ENCODE measurements at regions of chr13 and their contacts with region 1.

Region 1: DNA sequence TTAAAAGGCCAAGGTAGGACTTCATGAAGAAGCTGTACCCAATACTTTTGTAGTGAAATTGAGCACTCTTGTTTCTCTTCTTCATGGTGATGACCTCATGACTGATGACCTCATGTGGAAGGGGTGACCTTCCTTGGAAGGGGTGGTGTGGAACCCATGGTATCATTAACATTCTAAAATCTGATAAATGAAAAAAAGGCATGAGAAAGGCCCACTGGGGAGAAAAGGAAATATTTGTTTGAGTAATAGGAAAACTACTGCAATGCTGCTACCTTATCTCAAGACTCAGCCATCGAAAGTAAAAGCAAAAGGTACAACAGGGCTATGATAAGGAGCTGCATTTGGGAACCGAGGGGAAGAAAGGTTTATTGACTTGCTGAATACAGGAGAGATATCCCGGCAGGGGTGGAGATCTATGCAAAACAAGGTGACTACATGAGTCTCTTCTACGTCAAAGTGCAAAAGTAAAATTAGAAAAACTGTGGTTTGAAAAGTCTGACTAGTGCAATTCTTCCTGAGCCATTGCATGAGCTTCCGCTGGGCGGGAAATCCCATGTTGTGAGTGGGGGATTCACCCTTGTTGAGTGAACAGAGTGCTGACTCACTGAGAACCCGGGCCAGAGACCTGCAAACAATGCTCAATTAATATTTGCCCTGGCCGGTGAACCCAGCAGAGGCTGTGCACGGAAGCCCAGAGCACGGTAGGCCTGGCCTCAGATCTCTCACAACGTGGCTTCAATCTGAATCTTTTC is 138.9 kb upstream of the RFC3 start:
- DNase-seq: peak; percentile 88
- H3K4me3 Mint-ChIP-seq: peak overlapping the region; percentile 43
- H3K27ac Mint-ChIP-seq: peak overlapping the region; percentile 92
- H3K4me1 Mint-ChIP-seq: peaks cover 26% of the 10 kb centered on the region
- H3K27me3 Mint-ChIP-seq: no peaks in the 10 kb centered on the region

Region 2: DNA sequence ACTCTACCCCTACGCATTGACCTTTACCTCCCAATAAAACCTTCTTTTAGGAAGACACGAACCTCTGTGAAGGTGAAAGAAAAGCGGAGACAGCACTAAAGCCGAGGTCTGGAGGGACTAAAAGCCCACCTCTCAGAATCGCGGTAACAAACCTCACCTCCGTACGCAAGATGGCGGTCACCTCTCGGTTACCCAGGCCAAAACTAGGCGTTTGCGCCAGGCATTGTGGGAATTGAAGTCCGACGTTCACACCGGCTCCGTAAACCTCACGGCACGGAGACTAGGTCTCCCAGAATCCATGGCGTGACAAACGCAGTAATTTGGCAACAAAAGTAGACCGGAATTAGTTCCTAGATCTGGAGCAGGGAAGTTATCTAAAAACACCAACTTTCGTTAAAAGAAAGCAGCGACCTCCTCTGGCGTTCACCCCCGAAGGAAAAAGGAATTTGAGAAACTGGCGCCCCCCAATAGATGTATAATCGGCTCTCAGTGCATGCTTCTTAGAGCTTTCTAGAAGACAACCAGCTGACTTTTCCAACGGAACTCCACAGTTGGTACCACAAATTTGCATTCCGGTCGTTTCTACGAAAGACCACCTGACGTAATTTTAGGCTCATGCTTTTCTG is 1140.3 kb before region 1 on chr13 and contains the start of gene N4BP2L2:
- intact Hi-C with region 1: loop called (anchors 2 kb)
- DNase-seq: peak; percentile 97
- H3K4me3 Mint-ChIP-seq: peak within 1 kb of the TSS; percentile 98
- H3K27ac Mint-ChIP-seq: peak within 1 kb of the TSS; percentile 99
- H3K4me1 Mint-ChIP-seq: peaks cover 37% of the 10 kb centered on the region
- H3K27me3 Mint-ChIP-seq: peaks cover 8% of the 10 kb centered on the region
- total RNA-seq, gene N4BP2L2: 87.5 and 88.0 TPM in 2 replicates

Region 3: DNA sequence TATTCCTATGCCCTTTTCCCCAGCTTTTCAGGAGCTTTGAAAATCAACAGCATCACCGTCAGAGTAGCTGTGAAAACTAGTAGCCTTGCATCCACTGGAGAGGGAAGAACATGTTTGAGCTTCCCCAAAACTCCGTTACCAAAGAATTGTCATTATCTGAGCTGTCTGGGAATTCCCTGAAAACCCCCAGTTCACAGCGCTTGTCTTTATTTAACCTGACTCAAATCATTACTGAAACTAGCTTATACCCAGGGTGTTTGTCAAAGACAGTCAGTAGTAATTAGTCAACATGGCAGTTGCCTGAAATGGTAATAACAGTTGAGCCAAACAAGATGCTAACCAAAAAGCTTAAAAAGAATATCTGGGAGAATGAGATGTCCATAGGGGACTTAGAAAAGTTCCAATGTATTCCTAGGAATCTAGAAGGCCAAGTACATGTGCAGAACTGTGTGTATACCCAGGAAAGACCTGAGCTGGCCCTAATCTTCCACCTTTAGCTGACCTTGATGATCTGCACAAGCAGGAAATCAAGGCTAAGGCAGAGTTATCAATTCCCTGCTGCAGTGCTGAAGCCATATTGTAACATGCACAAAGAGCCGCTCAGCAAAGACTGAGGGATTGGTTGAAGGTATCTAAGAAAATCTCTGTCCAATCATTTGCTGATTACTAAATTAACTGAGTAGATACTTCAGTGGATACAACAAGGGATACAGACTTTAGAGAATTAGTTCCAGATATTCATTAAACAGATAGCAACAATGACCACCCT is 532.1 kb before region 1 on chr13:
- intact Hi-C with region 1: loop called (anchors 1 kb)
- DNase-seq: peak; percentile 75
- H3K4me3 Mint-ChIP-seq: peak overlapping the region; percentile 35
- H3K27ac Mint-ChIP-seq: peak overlapping the region; percentile 90
- H3K4me1 Mint-ChIP-seq: peaks cover 28% of the 10 kb centered on the region
- H3K27me3 Mint-ChIP-seq: no peaks in the 10 kb centered on the region

Region 4: DNA sequence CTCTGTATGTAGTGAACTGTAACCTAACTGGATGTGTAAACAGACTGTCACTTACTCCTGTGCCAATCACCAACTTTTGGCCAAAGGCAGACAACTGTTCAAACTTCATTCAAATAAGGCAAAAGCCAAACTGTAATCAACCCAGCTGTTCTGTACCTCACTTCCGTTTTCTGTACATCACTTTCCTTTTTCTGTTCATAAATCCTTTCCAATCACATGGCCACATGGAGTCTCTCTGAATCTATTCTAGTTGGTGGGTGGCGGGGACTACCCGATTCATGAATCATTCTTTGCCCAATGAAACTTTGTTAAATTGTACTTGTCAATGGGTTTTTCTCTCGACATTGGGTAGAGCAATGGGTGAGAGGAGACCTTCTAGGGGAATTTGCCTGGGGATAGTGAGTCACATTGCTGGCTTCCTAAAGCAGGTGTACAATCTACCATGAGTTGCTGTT is 39.4 kb before region 1 on chr13:
- intact Hi-C with region 1: loop called (anchors 1 kb)
- DNase-seq: peak; percentile 65
- H3K4me3 Mint-ChIP-seq: no peak overlapping the region
- H3K27ac Mint-ChIP-seq: peak overlapping the region; percentile 61
- H3K4me1 Mint-ChIP-seq: peaks cover 39% of the 10 kb centered on the region
- H3K27me3 Mint-ChIP-seq: no peaks in the 10 kb centered on the region

Region 5: DNA sequence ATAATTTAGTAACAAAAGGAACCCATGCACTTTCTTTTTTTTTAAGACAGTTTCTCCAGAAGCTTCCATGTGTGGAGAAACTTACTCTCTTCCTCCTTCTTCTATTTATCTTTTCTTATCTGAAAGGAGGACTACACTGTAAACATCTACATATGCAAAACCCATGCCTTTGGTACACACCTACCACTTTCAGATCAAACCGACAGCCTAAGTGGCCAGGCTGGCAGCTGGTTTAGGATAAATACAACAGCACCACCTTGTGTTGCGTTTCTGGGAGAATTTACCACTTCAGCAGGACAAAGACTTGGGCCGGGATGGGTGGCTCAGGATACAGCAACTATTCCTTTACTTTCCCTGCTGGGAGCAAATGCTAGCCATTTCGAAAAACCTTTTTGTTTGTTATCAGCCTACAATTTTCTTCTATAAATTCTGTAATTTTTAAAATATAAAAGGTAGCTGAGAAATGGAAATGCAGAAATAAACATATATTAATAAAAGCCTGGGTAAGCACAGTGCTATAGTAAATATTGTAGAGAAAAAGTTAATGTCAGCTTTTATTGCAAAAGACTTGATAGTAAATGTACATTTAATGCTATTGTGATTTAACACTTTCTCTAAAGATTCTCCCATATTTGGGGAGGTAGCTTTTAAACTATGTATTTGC is 44.8 kb after region 1 on chr13:
- intact Hi-C with region 1: loop called (anchors 1 kb)
- DNase-seq: peak; percentile 90
- H3K4me3 Mint-ChIP-seq: no peak overlapping the region
- H3K27ac Mint-ChIP-seq: peak overlapping the region; percentile 76
- H3K4me1 Mint-ChIP-seq: peaks cover 26% of the 10 kb centered on the region
- H3K27me3 Mint-ChIP-seq: no peaks in the 10 kb centered on the region

Region 6: GRCh38 chr13:33817901-33818706 is 139.0 kb after region 1 on chr13 and contains the start of gene RFC3:
- intact Hi-C with region 1: loop called (anchors 5 kb)
- DNase-seq: peak; percentile 98
- H3K4me3 Mint-ChIP-seq: peak within 1 kb of the TSS; percentile 93
- H3K27ac Mint-ChIP-seq: peak within 1 kb of the TSS; percentile 95
- H3K4me1 Mint-ChIP-seq: peaks cover 30% of the 10 kb centered on the region
- H3K27me3 Mint-ChIP-seq: no peaks in the 10 kb centered on the region
- total RNA-seq, gene RFC3: 77.8 and 81.0 TPM in 2 replicates